G401 (cell line): ENCODE measurements at regions of chr3 and their contacts with region 1.

Region 1: GRCh38 chr3:14725013-14725412 is 50.1 kb downstream of the C3orf20 start:
- DNase-seq: no peak

Region 2: GRCh38 chr3:14565868-14566588 is 159.0 kb before region 1 on chr3:
- in situ Hi-C with region 1: no loop called
- DNase-seq: no peak

Region 3: DNA sequence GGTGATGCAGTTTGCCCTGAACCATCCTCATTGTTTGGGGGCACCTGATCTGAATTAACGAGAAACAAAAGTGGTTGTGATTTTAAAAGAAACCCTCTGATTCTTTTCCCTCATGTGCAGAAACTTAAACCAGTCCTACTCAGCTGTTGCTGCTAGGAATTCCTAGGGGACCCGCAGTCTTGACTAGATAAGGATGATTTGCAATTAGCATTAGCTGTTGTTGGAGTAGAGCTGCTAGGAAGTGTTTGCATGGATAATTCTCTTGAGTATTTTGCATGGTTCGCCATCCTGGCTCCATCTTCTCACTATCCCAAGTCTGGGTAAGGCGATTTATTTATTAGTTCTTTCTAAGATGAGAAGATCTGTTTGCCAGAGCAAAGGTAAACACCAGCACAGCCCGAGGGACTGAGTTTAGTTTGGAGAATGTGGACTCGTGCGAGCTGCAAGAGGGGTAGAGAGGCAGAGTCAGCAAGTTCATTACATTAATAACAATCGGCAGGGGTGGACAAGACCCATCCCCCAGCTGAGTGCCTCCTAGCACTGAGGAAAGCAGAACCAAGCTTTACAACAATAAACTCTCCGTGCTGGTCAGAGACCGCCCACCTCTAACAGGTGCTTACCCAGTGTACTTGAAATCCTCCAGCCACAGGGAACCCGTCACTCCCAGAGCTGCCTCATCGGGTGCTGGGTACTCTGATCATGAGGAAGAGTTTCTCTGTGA is 97.8 kb after region 1 on chr3:
- in situ Hi-C with region 1: loop called (anchors 10 kb)
- DNase-seq: no peak